Transverse colon (tissue), 4 donors: ENCODE measurements at regions of chr1 and their contacts with region 1.

Region 1: DNA sequence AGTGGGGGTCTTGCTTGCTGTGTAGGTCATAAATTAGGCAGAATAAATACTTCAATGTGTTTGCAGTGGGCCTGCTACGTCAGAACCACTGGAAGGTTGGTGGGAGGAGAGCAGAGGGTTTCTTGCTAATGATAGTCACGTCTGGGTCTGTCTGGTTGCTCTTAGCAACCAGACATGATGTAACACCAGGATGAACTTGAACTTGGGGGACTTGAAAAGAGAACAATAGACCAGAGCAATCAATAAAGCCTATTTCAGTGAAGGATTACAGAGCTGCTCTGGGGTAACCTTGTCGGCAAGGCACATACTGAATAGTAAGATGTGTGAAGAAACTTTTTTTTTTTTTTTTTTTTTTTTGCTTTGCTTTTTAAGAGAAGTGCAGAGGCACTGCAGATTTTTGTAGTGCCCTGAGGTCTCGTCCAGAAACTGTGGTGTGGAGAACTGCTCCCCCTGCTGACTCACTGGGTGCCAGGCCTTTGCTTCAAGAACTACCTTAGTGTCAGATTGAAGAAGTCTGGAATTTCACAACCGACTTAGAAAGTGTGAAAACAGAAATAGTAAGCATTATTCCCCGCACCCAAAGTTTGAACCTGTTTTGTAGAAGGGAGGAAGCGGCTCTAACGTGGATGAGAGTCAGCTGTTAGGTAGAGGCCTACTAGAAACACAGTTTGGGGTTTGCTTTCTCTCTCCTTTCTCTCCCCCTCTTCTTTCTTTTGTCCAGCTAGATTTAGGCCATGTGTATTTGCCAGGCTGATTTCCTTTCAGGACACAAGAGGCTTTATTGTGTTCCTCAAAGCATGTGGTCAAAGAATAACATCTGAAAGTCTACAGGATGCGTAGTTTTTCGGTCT is 271.6 kb downstream of the TM2D1 start:
- DNase-seq: peak; percentile 85
- H3K4me3 ChIP-seq: no peak overlapping the region
- H3K27ac ChIP-seq: peak overlapping the region; percentile 74 to 82 (median 80)
- H3K4me1 ChIP-seq: peaks cover 26 to 63% (median 47%) of the 10 kb centered on the region in 4 donors
- H3K27me3 ChIP-seq: no peaks in the 10 kb centered on the region
- CTCF ChIP-seq: peak; percentile 64 to 78 (median 72)
- EP300 ChIP-seq: no peak
- POLR2A ChIP-seq: no peak

Region 2: GRCh38 chr1:60978421-60979357 is 474.6 kb before region 1 on chr1:
- in situ Hi-C with region 1: no loop called
- intact Hi-C with region 1: loop called (anchors 10 kb)
- DNase-seq: peak; percentile 21
- H3K4me3 ChIP-seq: no peak overlapping the region
- H3K27ac ChIP-seq: no peak overlapping the region
- H3K4me1 ChIP-seq: peaks cover 0 to 11% (median 0%) of the 10 kb centered on the region in 4 donors
- H3K27me3 ChIP-seq: no peaks in the 10 kb centered on the region
- CTCF ChIP-seq: peak; percentile 17 to 47 (median 38)
- EP300 ChIP-seq: no peak
- POLR2A ChIP-seq: no peak

Region 3: GRCh38 chr1:61279570-61279969 is 173.8 kb before region 1 on chr1:
- in situ Hi-C with region 1: no loop called
- intact Hi-C with region 1: no loop called
- DNase-seq: no peak
- H3K4me3 ChIP-seq: no peak overlapping the region
- H3K27ac ChIP-seq: peak overlapping the region; percentile 22 to 60 (median 26)
- H3K4me1 ChIP-seq: peaks cover 0 to 3% (median 0%) of the 10 kb centered on the region in 4 donors
- H3K27me3 ChIP-seq: no peaks in the 10 kb centered on the region
- CTCF ChIP-seq: no peak
- EP300 ChIP-seq: no peak
- POLR2A ChIP-seq: no peak

Region 4: GRCh38 chr1:61851849-61852669 is 398.7 kb after region 1 on chr1:
- in situ Hi-C with region 1: loop called in 1 of 4 experiments (anchors 25 kb)
- intact Hi-C with region 1: no loop called
- DNase-seq: no peak
- H3K4me3 ChIP-seq: no peak overlapping the region
- H3K27ac ChIP-seq: no peak overlapping the region
- H3K4me1 ChIP-seq: no peaks in the 10 kb centered on the region
- H3K27me3 ChIP-seq: no peaks in the 10 kb centered on the region
- CTCF ChIP-seq: peak; percentile 53 to 68 (median 64)
- EP300 ChIP-seq: no peak
- POLR2A ChIP-seq: no peak